GM12878 (cell line): ENCODE measurements at regions of chr22 and their contacts with region 1.

Region 1: DNA sequence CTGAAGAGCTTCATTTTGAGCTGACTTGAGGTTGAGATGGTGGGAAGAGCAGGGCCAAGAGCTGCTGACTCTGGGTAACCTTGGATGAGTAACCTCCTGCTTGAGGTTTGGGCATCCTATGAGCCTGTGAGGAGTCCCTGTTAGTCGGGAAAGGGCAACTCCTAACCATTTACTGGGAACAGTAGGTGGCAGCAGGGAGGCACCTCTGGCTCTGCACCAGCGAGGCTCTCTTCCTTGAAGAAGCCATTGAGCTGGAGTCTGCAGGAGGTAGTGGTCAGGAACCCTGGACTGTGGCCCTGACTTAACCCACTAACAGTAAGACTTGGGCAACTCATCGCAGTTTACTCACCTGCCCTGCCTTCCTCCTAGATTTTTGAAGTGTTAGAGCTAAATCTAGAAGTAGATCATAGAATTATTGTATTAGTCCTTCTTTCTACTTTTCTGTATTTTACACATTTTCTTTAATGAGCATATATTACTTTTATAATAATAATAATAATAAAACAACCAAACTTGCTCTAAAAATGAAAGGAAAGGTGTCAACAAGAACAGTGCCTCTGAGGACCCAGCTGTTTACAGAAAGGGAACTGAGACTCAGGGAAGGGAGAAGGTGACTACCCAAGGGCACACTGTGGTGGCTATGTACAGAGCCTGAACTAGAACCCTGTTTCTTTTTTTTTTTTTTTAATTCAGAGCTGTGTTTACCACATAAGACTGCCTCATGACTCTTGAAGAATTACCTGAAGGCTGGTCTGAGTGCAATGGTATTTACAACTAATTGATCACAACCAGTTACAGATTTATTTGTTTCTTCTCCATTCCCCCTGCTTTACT is 47.5 kb downstream of the MEI1 start:
- DNase-seq: peak; percentile 80
- ATAC-seq: peak; percentile 94
- H3K4me3 ChIP-seq: peak overlapping the region; percentile 34; the same call in 1 of the 2 replicates
- H3K27ac ChIP-seq: peak overlapping the region; percentile 69
- H3K4me1 ChIP-seq: peaks cover 42% of the 10 kb centered on the region
- H3K27me3 ChIP-seq: no peaks in the 10 kb centered on the region
- CTCF ChIP-seq: peak; percentile 75 to 81 (median 77)
- EP300 ChIP-seq: peak; percentile 65 to 85
- POLR2A ChIP-seq: no peak
- RAD21 ChIP-seq: peak; percentile 71

Region 2: GRCh38 chr22:41647771-41648170 is 99.0 kb before region 1 on chr22:
- CTCF ChIA-PET with region 1: no interaction called
- POLR2A ChIA-PET with region 1: no interaction called
- RAD21 ChIA-PET with region 1: no interaction called
- SMC1A ChIA-PET with region 1: no interaction called
- in situ Hi-C with region 1: no loop called
- intact Hi-C with region 1: no loop called
- DNase-seq: no peak
- ATAC-seq: no peak
- H3K4me3 ChIP-seq: no peak overlapping the region
- H3K27ac ChIP-seq: no peak overlapping the region
- H3K4me1 ChIP-seq: no peaks in the 10 kb centered on the region
- H3K27me3 ChIP-seq: no peaks in the 10 kb centered on the region
- CTCF ChIP-seq: no peak
- EP300 ChIP-seq: no peak
- POLR2A ChIP-seq: no peak
- RAD21 ChIP-seq: no peak

Region 3: GRCh38 chr22:41732096-41732772 is 14.6 kb before region 1 on chr22:
- CTCF ChIA-PET with region 1: interaction called, 13 read pairs
- POLR2A ChIA-PET with region 1: interaction called, 7 read pairs
- RAD21 ChIA-PET with region 1: interaction called, 6 read pairs
- SMC1A ChIA-PET with region 1: interaction called, 8 read pairs
- in situ Hi-C with region 1: no loop called
- intact Hi-C with region 1: no loop called
- DNase-seq: no peak
- ATAC-seq: peak; percentile 76
- H3K4me3 ChIP-seq: no peak overlapping the region
- H3K27ac ChIP-seq: no peak overlapping the region
- H3K4me1 ChIP-seq: peaks cover 4% of the 10 kb centered on the region; the same call in 1 of the 2 replicates
- H3K27me3 ChIP-seq: no peaks in the 10 kb centered on the region
- CTCF ChIP-seq: no peak
- EP300 ChIP-seq: no peak
- POLR2A ChIP-seq: no peak
- RAD21 ChIP-seq: no peak

Region 4: GRCh38 chr22:41762980-41763779 is 16.4 kb after region 1 on chr22:
- CTCF ChIA-PET with region 1: interaction called, 65 read pairs
- POLR2A ChIA-PET with region 1: no interaction called
- RAD21 ChIA-PET with region 1: interaction called, 7 read pairs
- SMC1A ChIA-PET with region 1: interaction called, 16 read pairs
- in situ Hi-C with region 1: no loop called
- intact Hi-C with region 1: no loop called
- DNase-seq: no peak
- ATAC-seq: peak; percentile 92
- H3K4me3 ChIP-seq: no peak overlapping the region
- H3K27ac ChIP-seq: no peak overlapping the region
- H3K4me1 ChIP-seq: no peaks in the 10 kb centered on the region
- H3K27me3 ChIP-seq: no peaks in the 10 kb centered on the region
- CTCF ChIP-seq: peak; percentile 50 to 74 (median 67); a peak in 5 of 6 replicates
- EP300 ChIP-seq: no peak
- POLR2A ChIP-seq: no peak
- RAD21 ChIP-seq: peak; percentile 62

Region 5: GRCh38 chr22:41775338-41775737 is 28.6 kb after region 1 on chr22:
- CTCF ChIA-PET with region 1: interaction called, 25 read pairs
- POLR2A ChIA-PET with region 1: interaction called, 3 read pairs
- RAD21 ChIA-PET with region 1: interaction called, 35 read pairs
- SMC1A ChIA-PET with region 1: interaction called, 35 read pairs
- in situ Hi-C with region 1: no loop called
- intact Hi-C with region 1: no loop called
- DNase-seq: no peak
- ATAC-seq: no peak
- H3K4me3 ChIP-seq: no peak overlapping the region
- H3K27ac ChIP-seq: no peak overlapping the region
- H3K4me1 ChIP-seq: no peaks in the 10 kb centered on the region; the same call in 1 of the 2 replicates
- H3K27me3 ChIP-seq: no peaks in the 10 kb centered on the region
- CTCF ChIP-seq: no peak
- EP300 ChIP-seq: no peak
- POLR2A ChIP-seq: no peak
- RAD21 ChIP-seq: no peak

Region 6: GRCh38 chr22:41800348-41801146 is 53.8 kb after region 1 on chr22 and contains the start of gene CCDC134:
- CTCF ChIA-PET with region 1: interaction called, 27 read pairs
- POLR2A ChIA-PET with region 1: interaction called, 28 read pairs
- RAD21 ChIA-PET with region 1: interaction called, 30 read pairs
- SMC1A ChIA-PET with region 1: interaction called, 32 read pairs
- in situ Hi-C with region 1: no loop called
- intact Hi-C with region 1: loop called (anchors 1 kb)
- DNase-seq: peak; percentile 70
- ATAC-seq: peak; percentile 98
- H3K4me3 ChIP-seq: peak within 1 kb of the TSS; percentile 89
- H3K27ac ChIP-seq: peak within 1 kb of the TSS; percentile 82
- H3K4me1 ChIP-seq: peaks cover 19% of the 10 kb centered on the region
- H3K27me3 ChIP-seq: no peaks in the 10 kb centered on the region
- CTCF ChIP-seq: no peak
- EP300 ChIP-seq: no peak
- POLR2A ChIP-seq: peak; percentile 95
- RAD21 ChIP-seq: no peak
- polyA plus RNA-seq, gene CCDC134: 0.35 to 1.2 TPM

Region 7: DNA sequence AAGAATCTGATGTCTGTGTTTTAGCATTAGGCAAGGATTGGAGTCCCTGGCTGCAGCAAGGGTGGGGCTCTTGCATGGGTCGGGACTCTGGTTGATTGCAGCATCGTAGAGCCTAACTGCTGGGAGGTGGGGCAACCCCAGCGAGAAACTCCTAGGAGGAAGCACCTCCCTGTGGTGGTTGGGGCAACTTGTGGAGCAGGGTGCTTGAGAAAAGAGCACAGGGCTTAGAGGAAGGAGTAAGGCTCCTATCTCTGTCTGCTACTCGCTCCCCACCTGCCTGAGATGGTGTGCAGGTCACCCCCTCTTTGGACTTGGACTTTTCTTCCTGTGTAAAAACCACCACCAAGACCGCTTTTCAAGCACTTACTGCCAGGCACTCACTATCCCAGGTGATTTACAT is 101.7 kb after region 1 on chr22:
- CTCF ChIA-PET with region 1: interaction called, 14 read pairs
- POLR2A ChIA-PET with region 1: no interaction called
- RAD21 ChIA-PET with region 1: interaction called, 3 read pairs
- SMC1A ChIA-PET with region 1: interaction called, 7 read pairs
- in situ Hi-C with region 1: no loop called
- intact Hi-C with region 1: no loop called
- DNase-seq: no peak
- ATAC-seq: peak; percentile 63
- H3K4me3 ChIP-seq: no peak overlapping the region
- H3K27ac ChIP-seq: peak overlapping the region; percentile 30; the same call in 1 of the 2 replicates
- H3K4me1 ChIP-seq: peaks cover 18% of the 10 kb centered on the region
- H3K27me3 ChIP-seq: no peaks in the 10 kb centered on the region
- CTCF ChIP-seq: no peak; a peak in 1 of 6 replicates
- EP300 ChIP-seq: no peak
- POLR2A ChIP-seq: no peak
- RAD21 ChIP-seq: no peak

Region 8: DNA sequence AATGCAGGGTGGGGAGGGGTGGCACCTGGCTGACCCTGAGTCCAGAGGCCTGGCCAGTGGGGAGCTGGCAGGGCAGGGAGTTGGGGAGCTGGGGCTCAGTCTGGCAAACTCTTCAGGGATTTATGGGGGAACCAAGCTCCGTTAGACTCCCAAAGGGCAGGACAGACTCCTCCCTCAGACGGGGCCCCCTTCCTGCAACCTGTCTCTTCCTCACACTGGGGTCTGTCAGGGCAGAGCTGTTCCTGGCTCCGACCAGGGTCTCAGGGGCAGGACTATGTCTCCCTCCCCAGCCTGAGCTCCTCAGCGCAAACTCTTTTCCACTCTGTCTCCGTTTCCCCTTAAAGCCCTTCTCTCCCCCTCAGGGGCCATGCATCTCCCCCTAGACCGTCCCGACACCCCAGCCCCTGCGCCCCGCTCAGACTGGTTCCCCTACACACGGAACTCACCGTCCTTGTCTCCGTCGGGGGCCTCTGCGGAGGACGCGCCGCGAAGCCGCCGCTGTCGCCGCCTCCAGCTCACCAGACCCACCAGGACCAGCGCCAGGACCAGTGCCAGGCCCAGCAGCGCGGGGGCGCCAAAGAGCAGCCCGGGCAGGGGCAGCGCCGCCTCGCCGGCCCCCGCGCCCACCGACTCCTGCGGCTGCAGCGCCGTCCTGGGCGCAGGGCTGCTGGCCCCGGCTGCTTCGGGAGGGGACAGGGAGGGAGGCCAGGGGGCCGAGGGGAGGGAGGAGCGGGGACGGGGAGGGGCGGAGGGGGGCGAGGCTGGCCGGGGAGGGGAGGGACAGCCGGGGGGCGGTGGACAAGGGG is 179.1 kb after region 1 on chr22:
- CTCF ChIA-PET with region 1: interaction called, 6 read pairs
- POLR2A ChIA-PET with region 1: interaction called, 19 read pairs
- RAD21 ChIA-PET with region 1: interaction called, 3 read pairs
- SMC1A ChIA-PET with region 1: interaction called, 5 read pairs
- in situ Hi-C with region 1: no loop called
- intact Hi-C with region 1: no loop called
- DNase-seq: no peak
- ATAC-seq: peak; percentile 59
- H3K4me3 ChIP-seq: peak overlapping the region; percentile 97
- H3K27ac ChIP-seq: peak overlapping the region; percentile 93
- H3K4me1 ChIP-seq: peaks cover 53% of the 10 kb centered on the region
- H3K27me3 ChIP-seq: no peaks in the 10 kb centered on the region
- CTCF ChIP-seq: peak; percentile 78 to 87 (median 79)
- EP300 ChIP-seq: no peak
- POLR2A ChIP-seq: peak; percentile 54; the same call in 1 of the 2 replicates
- RAD21 ChIP-seq: peak; percentile 50